ENCODE measurements at regions of chr2 and their contacts with region 1.

Region 1: GRCh38 chr2:181742922-181743722 is 62.8 kb upstream of the NEUROD1 start:
- DNase-seq: peak; percentile 50
- H3K4me3 ChIP-seq: no peak overlapping the region
- H3K27ac ChIP-seq: no peak overlapping the region
- H3K27me3 ChIP-seq: no peaks in the 10 kb centered on the region
- CTCF ChIP-seq: peak; percentile 55

Region 2: GRCh38 chr2:181891258-181891965 is 148.3 kb after region 1 on chr2 and contains the start of gene ITPRID2:
- in situ Hi-C with region 1: loop called (anchors 25 kb)
- DNase-seq: peak; percentile 79
- H3K4me3 ChIP-seq: peak within 1 kb of the TSS; percentile 89
- H3K27ac ChIP-seq: peak within 1 kb of the TSS; percentile 89
- H3K27me3 ChIP-seq: no peaks in the 10 kb centered on the region
- CTCF ChIP-seq: no peak

Region 3: GRCh38 chr2:181977661-181978350 is 234.7 kb after region 1 on chr2:
- in situ Hi-C with region 1: no loop called
- DNase-seq: peak; percentile 67
- H3K4me3 ChIP-seq: no peak overlapping the region
- H3K27ac ChIP-seq: no peak overlapping the region
- H3K27me3 ChIP-seq: no peaks in the 10 kb centered on the region
- CTCF ChIP-seq: no peak

Region 4: GRCh38 chr2:182077451-182078142 is 334.5 kb after region 1 on chr2:
- in situ Hi-C with region 1: loop called (anchors 25 kb)
- DNase-seq: peak; percentile 87
- H3K4me3 ChIP-seq: no peak overlapping the region
- H3K27ac ChIP-seq: no peak overlapping the region
- H3K27me3 ChIP-seq: no peaks in the 10 kb centered on the region
- CTCF ChIP-seq: peak; percentile 59

Measured in brain microvascular endothelial cell (primary cell).